ENCODE measurements at regions of chr17 and their contacts with region 1.

Region 1: DNA sequence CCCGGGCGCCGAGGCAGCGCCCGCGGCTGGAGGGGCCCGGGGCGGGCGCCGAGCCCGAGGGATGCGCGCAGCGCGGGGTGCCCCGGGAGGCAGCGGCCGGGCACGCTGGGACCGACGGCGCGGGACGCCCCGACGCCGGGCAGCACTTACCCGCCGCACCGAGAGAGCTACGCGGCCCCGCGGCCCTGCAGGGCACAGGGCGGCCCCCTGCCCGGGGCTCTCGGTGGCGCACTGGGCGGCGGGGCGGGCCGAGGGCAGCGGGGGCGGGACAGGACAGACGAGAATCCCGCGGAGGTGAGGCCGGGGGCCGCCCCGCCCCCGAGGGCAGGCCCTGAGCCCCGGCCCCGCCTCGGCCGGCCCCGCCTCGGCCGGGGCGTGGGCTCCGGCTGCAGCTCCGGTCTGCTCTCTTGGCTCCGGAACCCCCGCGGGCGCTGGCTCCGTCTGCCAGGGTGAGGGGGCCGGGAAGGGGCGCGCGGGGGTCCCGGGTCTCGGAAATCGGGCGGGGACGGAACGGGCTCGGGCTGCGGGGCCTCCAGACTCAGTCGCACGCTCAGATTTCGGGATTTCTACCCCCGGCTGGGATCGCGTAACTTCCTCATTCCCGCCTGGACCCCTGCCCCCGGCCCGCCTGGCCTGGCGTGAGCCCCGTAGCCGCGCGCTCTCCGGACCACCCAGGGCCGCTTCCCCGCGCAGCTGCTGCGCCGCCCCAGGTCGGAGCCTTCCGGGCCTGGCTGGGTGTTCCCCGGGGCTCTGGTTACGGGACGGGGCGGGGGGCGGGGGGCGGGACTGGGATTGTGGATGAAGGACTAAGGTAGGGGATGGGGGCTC is at the start of gene PLD2:
- DNase-seq: peak; percentile 74
- H3K4me3 ChIP-seq: peak within 1 kb of the TSS; percentile 87 to 96 (median 91)
- H3K27ac ChIP-seq: no peak within 1 kb of the TSS
- H3K4me1 ChIP-seq: peaks cover 11% of the 10 kb centered on the region
- H3K27me3 ChIP-seq: no peaks in the 10 kb centered on the region
- CTCF ChIP-seq: no peak
- POLR2A ChIP-seq: peak; percentile 85
- total RNA-seq, gene PLD2: 52.3 and 58.7 TPM in 2 replicates

Region 2: GRCh38 chr17:4796553-4796921 is 10.5 kb before region 1 on chr17:
- CTCF ChIA-PET with region 1: interaction called, 6 read pairs
- POLR2A ChIA-PET with region 1: interaction called, 5 read pairs
- dilution Hi-C with region 1: no loop called
- intact Hi-C with region 1: loop called (anchors 1 kb)
- DNase-seq: peak; percentile 56
- H3K4me3 ChIP-seq: peak overlapping the region; percentile 75 to 96 (median 95)
- H3K27ac ChIP-seq: peak overlapping the region; percentile 58
- H3K4me1 ChIP-seq: peaks cover 2% of the 10 kb centered on the region
- H3K27me3 ChIP-seq: no peaks in the 10 kb centered on the region
- CTCF ChIP-seq: no peak
- POLR2A ChIP-seq: no peak

Region 3: DNA sequence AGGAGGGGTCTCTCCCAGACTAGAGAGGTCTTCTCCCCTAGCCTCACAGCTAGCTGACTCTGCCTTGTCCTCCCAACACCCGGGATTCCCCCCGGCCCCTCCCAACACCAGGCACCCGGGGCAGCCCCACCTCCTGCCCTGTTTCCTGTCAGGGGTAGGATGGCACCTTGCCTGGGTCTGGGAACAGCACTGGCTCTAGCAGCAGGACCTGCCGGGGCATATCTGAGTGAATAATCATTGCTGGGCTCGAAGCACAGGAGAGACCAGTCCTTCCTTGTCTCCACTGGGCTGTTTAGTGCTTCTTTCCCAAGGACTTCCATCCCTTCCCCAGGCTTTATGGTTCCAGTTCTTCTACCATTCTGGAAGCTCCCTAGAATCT is 51.9 kb after region 1 on chr17:
- CTCF ChIA-PET with region 1: interaction called, 11 read pairs
- POLR2A ChIA-PET with region 1: interaction called, 3 read pairs
- dilution Hi-C with region 1: no loop called
- intact Hi-C with region 1: no loop called
- DNase-seq: peak; percentile 69
- H3K4me3 ChIP-seq: peak overlapping the region in 1 of 3 experiments; percentile 48
- H3K27ac ChIP-seq: peak overlapping the region; percentile 79
- H3K4me1 ChIP-seq: peaks cover 47% of the 10 kb centered on the region
- H3K27me3 ChIP-seq: no peaks in the 10 kb centered on the region
- CTCF ChIP-seq: no peak
- POLR2A ChIP-seq: peak; percentile 40

Region 4: DNA sequence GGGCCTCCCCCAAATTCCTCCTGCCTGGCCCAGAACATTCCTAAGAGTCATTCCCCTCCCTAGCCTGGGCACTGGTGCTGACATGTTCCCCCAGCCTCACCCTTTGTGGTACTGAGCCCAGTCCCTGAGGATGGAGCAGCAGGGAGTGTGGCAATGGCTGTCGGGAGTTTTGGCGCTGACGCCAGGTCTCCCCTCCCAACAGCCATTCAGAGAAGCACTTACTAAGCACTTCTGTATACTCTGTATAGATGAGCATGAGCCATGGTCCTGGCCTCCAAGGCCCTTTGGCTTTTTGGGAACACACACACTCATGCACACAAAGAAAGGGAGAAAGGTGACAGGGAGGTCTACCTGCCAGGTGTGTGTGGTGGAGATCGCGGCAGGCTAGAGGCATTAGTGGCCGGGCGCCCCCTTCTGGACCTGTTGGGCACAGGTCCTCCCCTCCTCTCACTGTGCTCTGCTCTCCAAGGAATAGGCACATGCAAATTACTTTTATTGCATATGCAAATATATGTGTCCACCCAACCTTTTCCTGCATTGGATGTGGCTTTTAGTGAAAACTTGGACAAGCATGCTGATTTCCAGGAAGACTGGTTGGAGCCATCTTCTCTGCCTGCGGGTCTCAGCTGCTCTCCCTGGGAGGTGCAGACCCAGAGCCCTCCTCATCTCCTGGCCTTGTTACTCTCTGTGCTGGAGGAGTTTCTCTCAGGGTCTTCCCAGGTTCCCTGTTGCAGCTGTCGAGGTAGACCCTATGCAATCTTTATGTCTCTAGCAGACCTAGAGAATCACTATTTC is 75.0 kb after region 1 on chr17:
- CTCF ChIA-PET with region 1: interaction called, 12 read pairs
- POLR2A ChIA-PET with region 1: no interaction called
- dilution Hi-C with region 1: no loop called
- intact Hi-C with region 1: no loop called
- DNase-seq: peak; percentile 52
- H3K4me3 ChIP-seq: no peak overlapping the region
- H3K27ac ChIP-seq: no peak overlapping the region
- H3K4me1 ChIP-seq: no peaks in the 10 kb centered on the region
- H3K27me3 ChIP-seq: no peaks in the 10 kb centered on the region
- CTCF ChIP-seq: peak; percentile 71 to 89
- POLR2A ChIP-seq: no peak

Measured in endothelial cell of umbilical vein (primary cell).